Pancreas (tissue), 10 donors: ENCODE measurements at regions of chr10 and their contacts with region 1.

Region 1: GRCh38 chr10:57338823-57339558 is 928.7 kb downstream of the IPMK start:
- DNase-seq: no peak
- ATAC-seq: peak in 3 of 4 donors; percentile 43 to 64 (median 54)
- H3K4me3 ChIP-seq: no peak overlapping the region
- H3K27ac ChIP-seq: no peak overlapping the region
- H3K4me1 ChIP-seq: no peaks in the 10 kb centered on the region
- H3K27me3 ChIP-seq: no peaks in the 10 kb centered on the region
- CTCF ChIP-seq: peak; percentile 64 to 84 (median 72)

Region 2: DNA sequence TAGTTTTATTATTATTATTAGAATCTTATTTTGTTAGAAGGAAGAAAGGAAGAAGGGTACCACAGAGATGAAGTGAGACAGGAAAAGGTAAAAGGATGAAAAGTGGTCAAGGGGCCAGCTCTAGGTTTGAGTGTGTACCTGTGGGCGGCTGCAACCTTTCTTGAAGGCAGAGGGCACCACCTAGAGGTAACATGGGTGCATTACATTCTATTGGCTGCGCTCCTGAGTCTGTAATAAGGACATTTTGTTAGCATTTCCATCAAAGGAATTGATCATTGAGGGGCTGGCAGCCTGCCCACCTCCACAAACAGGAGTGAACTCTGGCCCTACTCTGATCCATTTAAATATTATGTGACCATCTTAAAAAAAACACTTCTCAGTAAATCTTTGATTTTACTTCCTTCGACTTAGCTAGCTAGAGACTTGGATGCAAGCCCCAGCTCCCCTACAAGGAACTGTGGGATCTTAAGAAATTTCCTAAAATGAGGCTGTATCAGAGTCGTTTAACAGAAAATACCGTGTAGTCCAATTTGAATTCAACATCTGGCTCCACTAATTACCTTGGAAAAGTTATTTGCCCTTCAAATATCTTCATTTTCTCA is 318.3 kb after region 1 on chr10:
- intact Hi-C with region 1: loop called (anchors 5 to 10 kb)
- DNase-seq: peak; percentile 18 to 65 (median 48)
- ATAC-seq: peak; percentile 68 to 92 (median 90)
- H3K4me3 ChIP-seq: no peak overlapping the region
- H3K27ac ChIP-seq: no peak overlapping the region
- H3K4me1 ChIP-seq: no peaks in the 10 kb centered on the region
- H3K27me3 ChIP-seq: no peaks in the 10 kb centered on the region
- CTCF ChIP-seq: peak; percentile 65 to 80 (median 72)

Region 3: DNA sequence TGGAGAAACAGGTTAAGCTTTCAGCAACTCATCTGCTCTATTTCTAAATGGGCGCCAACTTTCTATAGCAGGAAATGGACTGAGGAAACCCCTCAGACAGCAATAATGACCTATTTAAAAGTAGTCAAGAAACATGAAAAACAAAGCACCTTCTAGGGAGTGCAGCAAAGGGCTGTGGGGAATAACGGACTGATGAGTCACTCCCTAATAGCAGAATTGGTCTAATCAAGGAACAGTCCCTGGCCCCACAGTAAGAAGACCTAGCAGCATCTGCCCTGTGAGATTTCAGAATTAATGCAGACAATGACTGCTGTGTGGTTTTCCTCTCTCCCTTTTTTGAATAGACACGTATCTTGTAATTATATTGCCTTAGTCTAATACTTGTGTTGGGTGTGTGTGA is 325.8 kb after region 1 on chr10:
- intact Hi-C with region 1: loop called in 1 of 3 experiments (anchors 10 kb)
- DNase-seq: no peak
- ATAC-seq: no peak
- H3K4me3 ChIP-seq: no peak overlapping the region
- H3K27ac ChIP-seq: no peak overlapping the region
- H3K4me1 ChIP-seq: no peaks in the 10 kb centered on the region
- H3K27me3 ChIP-seq: no peaks in the 10 kb centered on the region
- CTCF ChIP-seq: no peak

Region 4: GRCh38 chr10:58064714-58065528 is 725.9 kb after region 1 on chr10:
- intact Hi-C with region 1: loop called in 1 of 3 experiments (anchors 10 kb)
- DNase-seq: peak in 2 of 6 donors; percentile 3 to 47
- ATAC-seq: peak; percentile 46 to 80 (median 74)
- H3K4me3 ChIP-seq: no peak overlapping the region
- H3K27ac ChIP-seq: no peak overlapping the region
- H3K4me1 ChIP-seq: no peaks in the 10 kb centered on the region
- H3K27me3 ChIP-seq: no peaks in the 10 kb centered on the region
- CTCF ChIP-seq: peak; percentile 48 to 56 (median 49)